Ascending aorta (tissue), 2 donors: ENCODE measurements at regions of chr21 and their contacts with region 1.

Region 1: DNA sequence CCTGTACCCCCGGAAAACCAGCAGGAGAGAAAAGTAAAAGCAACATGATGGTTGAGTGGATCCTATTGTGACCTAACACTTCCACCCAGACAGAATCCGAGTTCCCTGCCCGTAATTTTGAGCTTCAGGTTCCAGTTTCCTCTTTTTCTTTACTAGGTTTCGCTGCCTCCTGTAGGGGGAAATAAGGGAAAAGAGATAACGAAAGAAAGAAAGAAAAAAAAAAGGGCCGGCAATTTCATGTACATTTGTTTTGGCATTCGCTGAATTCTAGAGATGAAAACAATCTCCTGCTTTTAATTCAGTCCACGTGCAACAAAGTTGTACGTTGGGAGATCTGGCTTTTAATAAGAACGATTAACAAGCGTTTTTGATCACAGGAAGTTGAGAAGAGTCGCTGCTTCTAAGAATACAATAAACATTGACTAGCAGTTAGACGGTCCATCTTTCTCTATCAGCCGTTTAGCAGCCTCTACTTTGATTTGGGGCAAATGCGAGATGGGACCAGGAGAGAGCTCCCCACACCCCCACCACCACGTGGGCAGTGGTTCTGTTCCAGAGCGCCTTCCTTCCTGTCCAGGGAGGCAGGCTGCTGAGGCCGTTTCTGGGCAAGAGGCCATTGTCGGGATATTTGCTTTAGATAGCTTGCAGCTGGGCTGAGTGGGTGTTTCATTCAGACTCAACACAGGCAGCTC is 155.9 kb upstream of the RUNX1 start:
- DNase-seq: peak in 1 of 2 donors; percentile 82
- H3K4me3 ChIP-seq: peak overlapping the region; percentile 4 to 50
- H3K27ac ChIP-seq: peak overlapping the region; percentile 70 to 72
- H3K4me1 ChIP-seq: peaks cover 4 to 30% of the 10 kb centered on the region in 2 donors
- H3K27me3 ChIP-seq: no peaks in the 10 kb centered on the region
- CTCF ChIP-seq: no peak

Region 2: GRCh38 chr21:35159881-35160280 is 45.1 kb before region 1 on chr21:
- intact Hi-C with region 1: no loop called
- DNase-seq: no peak
- H3K4me3 ChIP-seq: no peak overlapping the region
- H3K27ac ChIP-seq: no peak overlapping the region
- H3K4me1 ChIP-seq: no peaks in the 10 kb centered on the region
- H3K27me3 ChIP-seq: no peaks in the 10 kb centered on the region
- CTCF ChIP-seq: no peak

Region 3: DNA sequence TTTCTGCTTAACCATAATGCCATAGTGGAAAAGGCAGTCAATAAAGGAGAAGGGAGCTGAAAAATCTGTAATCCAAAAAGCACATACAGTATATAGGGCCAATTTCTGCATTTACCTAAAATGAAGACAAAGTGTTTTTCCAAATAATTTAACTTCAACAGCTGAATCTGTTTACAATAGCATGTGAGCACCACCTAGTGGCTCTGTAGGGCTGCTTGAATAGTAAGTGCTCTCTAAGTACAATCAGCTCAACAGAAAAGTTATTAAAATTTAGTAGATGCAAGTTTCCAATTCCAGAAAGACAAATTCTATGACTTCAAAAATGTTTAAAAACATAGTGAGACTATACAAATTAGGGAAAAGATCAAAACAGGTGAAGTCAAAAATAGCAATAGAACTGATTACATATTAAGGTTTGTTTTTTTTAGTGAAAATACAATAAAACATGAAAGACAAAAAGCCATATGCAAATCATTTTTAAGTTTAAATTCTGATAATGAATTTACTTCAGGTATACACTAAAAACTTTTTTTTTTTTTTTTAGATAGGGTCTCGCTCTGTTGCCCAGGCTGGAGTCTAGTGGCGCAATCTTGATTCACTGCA is 635.3 kb after region 1 on chr21:
- intact Hi-C with region 1: loop called (anchors 10 kb)
- DNase-seq: peak in 1 of 2 donors; percentile 79
- H3K4me3 ChIP-seq: no peak overlapping the region
- H3K27ac ChIP-seq: no peak overlapping the region
- H3K4me1 ChIP-seq: peaks cover 0 to 8% of the 10 kb centered on the region in 2 donors
- H3K27me3 ChIP-seq: no peaks in the 10 kb centered on the region
- CTCF ChIP-seq: peak; percentile 65 to 84 (median 66)